Aorta (tissue), 5 donors: ENCODE measurements at regions of chr9 and their contacts with region 1.

Region 1: DNA sequence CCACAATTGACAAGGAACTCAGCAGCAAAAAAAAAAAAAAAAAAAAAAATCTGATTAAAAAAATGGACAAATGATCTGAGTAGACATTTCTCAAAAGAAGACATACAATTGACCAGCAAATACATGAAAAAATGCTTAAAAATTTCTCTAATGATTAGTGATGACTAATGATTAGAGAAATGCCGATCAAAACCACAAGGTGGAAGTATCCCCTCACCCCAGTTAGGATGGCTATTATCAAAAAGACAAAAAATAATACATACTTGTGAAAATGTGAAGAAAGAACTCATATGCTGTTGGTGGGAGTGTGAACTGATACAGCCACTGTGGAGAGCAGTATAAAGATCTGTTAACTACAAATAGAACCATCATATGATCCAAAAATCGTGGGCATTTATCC is 245.3 kb downstream of the OSTF1 start:
- DNase-seq: no peak
- ATAC-seq: no peak
- H3K4me3 ChIP-seq: no peak overlapping the region
- H3K27ac ChIP-seq: no peak overlapping the region
- H3K4me1 ChIP-seq: no peaks in the 10 kb centered on the region
- H3K27me3 ChIP-seq: no peaks in the 10 kb centered on the region

Region 2: DNA sequence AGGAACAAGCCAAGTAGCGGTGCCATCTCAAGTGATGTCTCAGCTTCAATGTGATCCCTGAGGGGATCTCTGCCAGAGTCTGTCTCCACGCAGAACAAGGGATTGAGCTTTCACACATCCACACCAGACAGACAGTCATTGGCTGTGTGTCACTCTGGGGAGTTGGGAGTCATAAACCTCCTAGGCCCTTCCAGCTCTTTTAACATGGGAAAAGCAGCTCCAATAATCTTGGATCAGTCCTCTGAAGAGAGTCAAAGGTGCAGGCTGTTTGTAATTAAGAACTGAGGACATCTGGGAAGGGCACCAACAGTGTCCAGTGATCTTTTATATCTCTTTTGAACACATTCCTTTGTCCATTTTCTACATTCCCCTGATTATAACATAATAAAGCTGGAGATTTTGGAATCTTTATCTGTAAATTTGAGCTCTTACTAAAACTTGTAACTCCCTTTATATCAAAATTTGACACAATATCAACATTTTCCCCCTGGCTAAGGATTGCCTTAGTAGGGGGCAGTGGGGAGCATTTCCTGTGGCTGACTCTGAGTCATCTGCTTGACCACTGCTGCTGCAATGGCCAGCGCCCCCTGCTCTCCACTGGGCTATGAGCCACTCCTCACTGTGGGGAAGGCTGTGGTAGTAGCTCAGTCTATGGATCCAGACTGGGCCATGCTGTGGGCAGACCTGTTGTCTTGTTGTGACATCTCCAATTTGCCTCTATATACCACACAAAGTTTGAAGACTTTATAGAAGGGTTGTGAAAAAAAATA is 39.1 kb after region 1 on chr9:
- intact Hi-C with region 1: no loop called
- DNase-seq: peak; percentile 66 to 77
- ATAC-seq: peak; percentile 70
- H3K4me3 ChIP-seq: no peak overlapping the region
- H3K27ac ChIP-seq: no peak overlapping the region
- H3K4me1 ChIP-seq: no peaks in the 10 kb centered on the region
- H3K27me3 ChIP-seq: no peaks in the 10 kb centered on the region

Region 3: DNA sequence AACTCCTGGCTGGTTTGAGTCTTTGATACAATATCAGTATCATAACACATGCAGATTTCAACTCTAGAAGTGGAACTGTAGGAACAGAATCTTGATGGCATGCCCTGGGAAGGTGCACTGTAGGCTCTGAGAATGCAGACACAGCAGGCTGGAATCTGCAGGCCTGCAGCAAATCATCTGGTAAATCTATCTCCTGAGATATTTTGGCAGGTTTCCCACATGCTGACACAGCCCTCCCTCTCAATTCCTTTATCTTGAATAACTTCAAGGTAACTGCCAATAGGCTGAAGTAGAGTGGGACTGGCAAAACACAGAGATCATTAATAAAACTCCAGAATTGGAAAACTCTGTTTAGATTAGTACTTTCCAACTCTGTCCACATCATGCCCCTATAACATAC is 379.1 kb after region 1 on chr9:
- intact Hi-C with region 1: no loop called
- DNase-seq: no peak
- ATAC-seq: no peak
- H3K4me3 ChIP-seq: no peak overlapping the region
- H3K27ac ChIP-seq: no peak overlapping the region
- H3K4me1 ChIP-seq: peaks cover 0 to 2% of the 10 kb centered on the region in 2 donors
- H3K27me3 ChIP-seq: no peaks in the 10 kb centered on the region

Region 4: DNA sequence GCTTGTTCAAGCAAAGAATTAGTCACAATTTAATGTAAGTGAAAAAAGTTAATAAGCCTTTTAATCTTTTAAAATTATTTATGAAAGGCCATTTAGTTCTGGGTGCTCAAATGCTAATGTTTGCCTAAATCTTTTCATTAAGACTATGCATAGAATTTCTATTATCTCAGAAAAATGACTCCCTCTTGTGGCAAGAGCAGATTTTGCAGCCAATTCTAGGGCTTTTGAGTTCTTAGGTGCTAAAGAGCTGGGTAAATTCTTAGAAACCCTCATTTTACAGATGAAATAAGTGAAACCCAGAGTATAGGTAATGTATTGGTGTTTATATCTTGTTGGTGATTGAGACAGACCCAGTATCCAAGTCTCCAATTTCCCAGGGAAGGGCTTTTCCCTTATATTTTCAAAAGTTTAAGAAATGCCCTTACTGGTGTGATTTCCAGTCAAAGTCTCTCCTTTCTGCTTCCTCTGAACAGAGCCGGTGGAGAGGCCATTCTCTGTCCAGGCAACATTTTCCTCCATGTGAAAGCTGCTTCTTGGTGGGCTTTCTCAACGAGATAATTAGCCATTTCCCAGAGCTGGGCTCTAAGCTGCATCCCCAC is 532.7 kb after region 1 on chr9:
- intact Hi-C with region 1: loop called in 1 of 2 experiments (anchors 10 kb)
- DNase-seq: no peak
- ATAC-seq: no peak
- H3K4me3 ChIP-seq: no peak overlapping the region
- H3K27ac ChIP-seq: no peak overlapping the region
- H3K4me1 ChIP-seq: no peaks in the 10 kb centered on the region
- H3K27me3 ChIP-seq: no peaks in the 10 kb centered on the region